ENCODE measurements at regions of chr17 and their contacts with region 1.

Region 1: GRCh38 chr17:49779739-49780231 is 8.7 kb upstream of the KAT7 start:
- DNase-seq: peak; percentile 68
- H3K4me3 ChIP-seq: no peak overlapping the region
- H3K27me3 ChIP-seq: 0 out of 2 replicates have a peak, but pooled peaks cover 1% of the 10 kb centered on the region
- CTCF ChIP-seq: peak; percentile 68

Region 2: GRCh38 chr17:49707608-49708514 is 71.9 kb before region 1 on chr17 and contains the start of gene SLC35B1:
- CTCF ChIA-PET with region 1: interaction called, 16 read pairs
- POLR2A ChIA-PET with region 1: no interaction called
- DNase-seq: peak; percentile 98
- H3K4me3 ChIP-seq: peak within 1 kb of the TSS; percentile 92
- H3K27me3 ChIP-seq: no peaks in the 10 kb centered on the region
- CTCF ChIP-seq: peak; percentile 95
- polyA plus RNA-seq, gene SLC35B1: 116 and 120 TPM in 2 replicates

Region 3: DNA sequence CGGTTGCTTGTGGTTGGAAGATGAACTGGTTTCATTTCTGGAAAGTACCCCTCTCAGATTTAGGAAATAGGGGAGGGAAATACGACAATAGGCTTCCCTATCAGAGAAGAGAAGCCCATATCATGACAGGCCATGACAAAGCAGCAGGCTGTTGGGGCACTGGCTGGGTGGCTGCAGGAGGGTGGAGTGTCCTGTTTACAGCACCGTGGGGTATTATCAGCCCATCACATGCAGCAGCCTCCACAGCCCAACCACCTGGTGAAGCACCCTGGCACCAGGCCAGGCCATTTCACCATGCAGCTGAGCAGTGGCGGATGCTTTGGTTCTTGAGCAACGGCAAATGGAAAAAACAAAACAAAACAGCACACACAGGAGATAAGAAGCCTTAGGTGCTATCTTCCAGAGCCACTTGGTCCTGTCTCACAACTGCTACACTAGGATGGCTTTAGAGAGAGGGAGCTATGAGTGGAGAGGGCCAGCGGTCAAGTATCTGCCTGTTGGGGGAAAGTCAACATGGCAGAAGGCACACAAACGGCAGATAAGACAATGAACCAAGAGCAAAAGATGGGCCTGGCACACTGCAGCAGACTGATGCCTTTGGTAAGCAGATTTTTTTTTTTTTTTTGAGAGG is 40.0 kb before region 1 on chr17:
- CTCF ChIA-PET with region 1: no interaction called
- POLR2A ChIA-PET with region 1: no interaction called
- DNase-seq: no peak
- H3K4me3 ChIP-seq: no peak overlapping the region
- H3K27me3 ChIP-seq: no peaks in the 10 kb centered on the region; the same call in 1 of the 2 replicates
- CTCF ChIP-seq: no peak

Region 4: DNA sequence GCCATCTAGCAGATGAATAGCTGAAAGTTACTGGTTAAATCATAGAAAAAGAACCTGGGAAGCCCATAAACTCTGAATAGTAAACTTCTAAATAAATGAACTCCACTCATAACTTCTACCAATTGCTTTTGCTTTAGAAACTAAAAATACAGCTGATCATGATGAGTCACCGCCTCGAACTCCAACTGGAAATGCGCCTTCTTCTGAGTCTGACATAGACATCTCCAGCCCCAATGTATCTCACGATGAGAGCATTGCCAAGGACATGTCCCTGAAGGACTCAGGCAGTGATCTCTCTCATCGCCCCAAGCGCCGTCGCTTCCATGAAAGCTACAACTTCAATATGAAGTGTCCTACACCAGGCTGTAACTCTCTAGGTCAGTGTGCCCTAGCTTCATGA is 18.4 kb after region 1 on chr17:
- CTCF ChIA-PET with region 1: no interaction called
- POLR2A ChIA-PET with region 1: no interaction called
- DNase-seq: no peak
- H3K4me3 ChIP-seq: no peak overlapping the region
- H3K27me3 ChIP-seq: no peaks in the 10 kb centered on the region
- CTCF ChIP-seq: no peak

Region 5: GRCh38 chr17:49815761-49816281 is 36.0 kb after region 1 on chr17:
- CTCF ChIA-PET with region 1: no interaction called
- POLR2A ChIA-PET with region 1: no interaction called
- DNase-seq: no peak
- H3K4me3 ChIP-seq: no peak overlapping the region
- H3K27me3 ChIP-seq: no peaks in the 10 kb centered on the region
- CTCF ChIP-seq: no peak

Region 6: DNA sequence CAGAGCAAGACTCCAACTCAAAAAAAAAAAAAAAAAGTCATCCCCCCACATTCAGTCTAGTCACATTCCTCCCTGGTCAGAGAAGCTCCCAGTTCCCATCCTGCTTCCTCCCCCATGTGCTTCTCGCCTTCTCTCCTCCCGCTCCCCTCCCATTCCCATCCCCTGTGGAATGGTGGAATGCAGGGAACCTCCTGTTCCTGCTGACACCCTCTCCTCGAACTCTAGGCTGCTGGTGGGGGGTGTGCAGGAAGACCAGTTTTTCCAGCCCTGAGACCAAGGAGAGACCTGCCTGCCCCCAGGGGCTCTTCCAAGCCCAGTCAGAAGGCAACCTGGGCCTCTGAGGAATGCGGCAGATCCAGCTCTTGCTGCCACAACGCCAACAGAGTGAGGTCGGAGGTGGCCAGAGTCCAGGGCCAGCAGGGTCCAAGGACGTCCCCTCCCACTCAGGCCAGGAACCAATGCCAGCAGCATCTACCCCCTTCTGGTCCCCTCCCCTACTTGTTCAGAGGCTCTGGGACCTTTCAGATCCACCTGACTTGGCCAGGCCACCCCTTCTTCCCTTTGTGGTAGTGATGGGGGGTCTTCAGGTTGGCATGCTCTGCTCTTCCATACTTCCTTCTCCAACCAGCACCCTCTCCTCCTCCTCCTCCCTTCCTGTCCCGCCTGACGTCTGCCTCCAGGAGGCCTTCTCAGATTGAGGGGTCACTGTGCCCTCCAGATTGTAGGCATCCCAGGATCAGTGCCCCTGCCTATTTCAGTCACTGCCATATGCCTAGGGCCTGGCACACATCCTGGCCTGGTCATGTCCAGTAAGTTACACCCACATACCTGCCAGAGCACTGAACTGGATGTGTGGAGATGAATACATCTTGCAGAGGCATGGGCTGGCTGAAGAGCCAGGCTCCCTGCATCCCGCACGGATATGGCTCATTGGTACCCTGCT is 107.6 kb after region 1 on chr17:
- CTCF ChIA-PET with region 1: no interaction called
- POLR2A ChIA-PET with region 1: no interaction called
- DNase-seq: no peak
- H3K4me3 ChIP-seq: no peak overlapping the region
- H3K27me3 ChIP-seq: peaks cover 38% of the 10 kb centered on the region
- CTCF ChIP-seq: no peak